ENCODE measurements at regions of chr1 and their contacts with region 1.

Region 1: GRCh38 chr1:207097871-207098324 is 6.1 kb upstream of the C4BPA start:
- DNase-seq: no peak
- H3K4me3 ChIP-seq: no peak overlapping the region
- H3K27ac ChIP-seq: no peak overlapping the region
- H3K4me1 ChIP-seq: no peaks in the 10 kb centered on the region
- H3K27me3 ChIP-seq: no peaks in the 10 kb centered on the region
- CTCF ChIP-seq: no peak
- EP300 ChIP-seq: no peak
- POLR2A ChIP-seq: no peak

Region 2: GRCh38 chr1:205645519-205645918 is 1452.4 kb before region 1 on chr1:
- in situ Hi-C with region 1: no loop called
- intact Hi-C with region 1: no loop called
- DNase-seq: no peak
- H3K4me3 ChIP-seq: no peak overlapping the region
- H3K27ac ChIP-seq: no peak overlapping the region
- H3K4me1 ChIP-seq: peaks cover 0 to 7% (median 0%) of the 10 kb centered on the region in 4 donors
- H3K27me3 ChIP-seq: no peaks in the 10 kb centered on the region
- CTCF ChIP-seq: no peak
- EP300 ChIP-seq: no peak
- POLR2A ChIP-seq: no peak

Region 3: GRCh38 chr1:207172885-207173284 is 75.0 kb after region 1 on chr1:
- in situ Hi-C with region 1: loop called in 1 of 4 experiments (anchors 10 kb)
- intact Hi-C with region 1: no loop called
- DNase-seq: peak; percentile 15
- H3K4me3 ChIP-seq: no peak overlapping the region
- H3K27ac ChIP-seq: peak overlapping the region; percentile 40 to 76 (median 62)
- H3K4me1 ChIP-seq: peaks cover 0 to 22% (median 6%) of the 10 kb centered on the region in 4 donors
- H3K27me3 ChIP-seq: no peaks in the 10 kb centered on the region
- CTCF ChIP-seq: no peak
- EP300 ChIP-seq: no peak
- POLR2A ChIP-seq: no peak